ACHN (cell line): ENCODE measurements at regions of chr1 and their contacts with region 1.

Region 1: DNA sequence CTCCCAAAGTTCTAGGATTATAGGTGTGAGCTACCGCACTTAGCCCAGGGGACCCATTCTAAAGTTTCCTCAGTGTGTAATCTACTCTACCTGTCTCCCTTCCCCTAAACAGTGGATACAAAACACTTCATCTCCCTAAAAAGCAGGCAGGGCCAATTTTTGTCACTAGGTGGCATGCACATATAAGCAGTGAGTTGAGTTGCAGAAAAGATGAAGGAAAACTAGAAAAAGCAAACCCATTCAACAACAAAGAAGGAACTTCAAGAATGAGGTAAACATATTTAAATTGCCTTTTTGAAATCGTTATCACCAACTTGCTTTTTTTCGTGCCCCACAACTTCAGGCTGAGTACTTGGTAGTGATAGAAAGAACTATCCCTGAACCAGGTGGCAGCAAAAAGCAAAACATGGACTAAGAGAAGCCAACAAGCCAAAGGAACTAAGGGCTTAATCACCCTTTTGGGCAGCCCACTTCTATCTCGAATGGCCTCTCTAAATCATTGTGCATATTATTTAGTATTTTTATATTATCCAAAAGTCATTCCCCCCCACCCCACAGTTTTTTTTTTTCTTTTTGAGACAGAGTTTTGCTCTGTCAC is 19.7 kb upstream of the ALDH9A1 start:
- DNase-seq: peak; percentile 75

Region 2: GRCh38 chr1:165928075-165928731 is 210.2 kb after region 1 on chr1:
- in situ Hi-C with region 1: loop called (anchors 10 kb)
- DNase-seq: peak; percentile 58